K562 (cell line): ENCODE measurements at regions of chr19 and their contacts with region 1.

Region 1: GRCh38 chr19:38653028-38653571 is 5.7 kb downstream of the ACTN4 start:
- DNase-seq: no peak
- ATAC-seq: 0 out of 3 replicates have a peak, but pooled peaks have one; percentile 12
- H3K4me3 ChIP-seq: no peak overlapping the region; the same call in 1 of the 2 replicates
- H3K27ac ChIP-seq: peak overlapping the region; percentile 81; the same call in 2 of the 3 replicates
- H3K4me1 ChIP-seq: peaks cover 38 to 48% of the 10 kb centered on the region in 2 experiments
- H3K27me3 ChIP-seq: no peaks in the 10 kb centered on the region
- CTCF ChIP-seq: no peak
- EP300 ChIP-seq: no peak
- POLR2A ChIP-seq: no peak
- RAD21 ChIP-seq: no peak

Region 2: GRCh38 chr19:38666663-38667511 is 13.8 kb after region 1 on chr19:
- CTCF ChIA-PET with region 1: no interaction called
- POLR2A ChIA-PET with region 1: interaction called, 20 read pairs
- in situ Hi-C with region 1: no loop called
- intact Hi-C with region 1: no loop called
- DNase-seq: no peak
- ATAC-seq: no peak
- H3K4me3 ChIP-seq: no peak overlapping the region
- H3K27ac ChIP-seq: peak overlapping the region; percentile 35
- H3K4me1 ChIP-seq: peaks cover 61 to 90% of the 10 kb centered on the region in 2 experiments
- H3K27me3 ChIP-seq: no peaks in the 10 kb centered on the region
- CTCF ChIP-seq: no peak
- EP300 ChIP-seq: no peak
- POLR2A ChIP-seq: no peak
- RAD21 ChIP-seq: no peak

Region 3: GRCh38 chr19:38676023-38676877 is 23.1 kb after region 1 on chr19:
- CTCF ChIA-PET with region 1: no interaction called
- POLR2A ChIA-PET with region 1: interaction called, 20 read pairs
- in situ Hi-C with region 1: no loop called
- intact Hi-C with region 1: loop called (anchors 1 kb)
- DNase-seq: peak; percentile 62 to 96 (median 83)
- ATAC-seq: peak; percentile 90
- H3K4me3 ChIP-seq: no peak overlapping the region; the same call in 1 of the 2 replicates
- H3K27ac ChIP-seq: peak overlapping the region; percentile 89
- H3K4me1 ChIP-seq: peaks cover 53 to 79% of the 10 kb centered on the region in 2 experiments
- H3K27me3 ChIP-seq: no peaks in the 10 kb centered on the region
- CTCF ChIP-seq: peak; percentile 30 to 42 (median 32); a peak in 3 of 6 replicates
- EP300 ChIP-seq: peak; percentile 99
- POLR2A ChIP-seq: no peak
- RAD21 ChIP-seq: peak in 1 of 2 experiments; percentile 57; a peak in 3 of 4 replicates